Calu3 (cell line): ENCODE measurements at regions of chr11 and their contacts with region 1.

Region 1: GRCh38 chr11:116691771-116692177 is 81.0 kb downstream of the BUD13 start:
- DNase-seq: peak; percentile 60
- H3K4me3 Mint-ChIP-seq: no peak overlapping the region
- H3K27ac Mint-ChIP-seq: no peak overlapping the region
- H3K4me1 Mint-ChIP-seq: peaks cover 8% of the 10 kb centered on the region
- H3K27me3 Mint-ChIP-seq: peaks cover 55% of the 10 kb centered on the region
- CTCF ChIP-seq: peak; percentile 70

Region 2: GRCh38 chr11:115334932-115335788 is 1356.6 kb before region 1 on chr11:
- CTCF ChIA-PET with region 1: no interaction called
- intact Hi-C with region 1: loop called (anchors 5 kb)
- DNase-seq: no peak
- H3K4me3 Mint-ChIP-seq: no peak overlapping the region
- H3K27ac Mint-ChIP-seq: no peak overlapping the region
- H3K4me1 Mint-ChIP-seq: no peaks in the 10 kb centered on the region
- H3K27me3 Mint-ChIP-seq: peaks cover 18% of the 10 kb centered on the region
- CTCF ChIP-seq: no peak

Region 3: DNA sequence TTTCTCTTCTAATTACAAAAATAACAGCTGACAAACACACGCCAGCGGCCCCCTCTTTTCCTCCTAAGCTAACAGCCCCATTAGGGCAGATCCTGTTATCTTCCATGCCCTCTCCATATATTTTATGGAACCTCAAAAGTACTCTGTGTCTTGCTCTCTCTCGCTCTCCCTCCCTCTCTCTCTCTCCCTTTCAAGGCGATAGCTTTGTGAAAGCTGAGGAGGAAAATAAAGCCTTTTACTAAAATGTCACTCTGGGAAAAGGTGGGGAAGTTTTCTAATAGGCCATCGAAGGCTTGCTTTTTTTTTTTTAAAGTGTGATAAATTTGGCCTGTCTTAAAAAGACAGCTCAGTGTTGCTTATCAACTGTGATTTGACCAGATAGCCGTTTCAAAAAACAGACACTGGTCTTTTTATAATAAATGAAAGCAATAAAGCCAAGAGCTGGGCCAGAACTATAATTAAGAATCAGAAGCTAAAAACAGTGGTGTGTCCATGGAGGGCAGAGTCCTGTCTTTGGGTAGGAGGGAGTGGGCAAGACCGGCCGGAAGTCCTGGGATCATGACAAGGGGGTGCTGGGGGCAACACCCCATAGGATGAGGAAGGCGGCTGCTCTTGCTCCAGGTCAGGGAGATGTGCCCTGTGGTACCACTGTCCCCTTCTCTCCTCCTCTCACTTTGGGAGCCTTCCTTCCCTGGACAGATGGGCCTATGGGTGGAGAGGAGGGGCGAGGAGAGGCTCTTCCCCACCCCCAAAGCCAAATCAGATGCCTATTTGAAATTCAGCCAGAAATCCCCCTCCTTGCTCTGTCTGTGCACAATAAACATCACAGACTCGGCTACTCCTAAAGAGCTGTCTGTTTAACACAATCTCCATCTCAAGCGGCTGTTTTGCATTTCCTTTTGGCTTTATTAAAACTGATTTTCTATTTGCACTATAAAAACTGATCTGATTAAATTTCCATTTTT is 186.2 kb before region 1 on chr11:
- CTCF ChIA-PET with region 1: no interaction called
- intact Hi-C with region 1: loop called (anchors 5 kb)
- DNase-seq: no peak
- H3K4me3 Mint-ChIP-seq: no peak overlapping the region
- H3K27ac Mint-ChIP-seq: no peak overlapping the region
- H3K4me1 Mint-ChIP-seq: no peaks in the 10 kb centered on the region
- H3K27me3 Mint-ChIP-seq: peaks cover 96% of the 10 kb centered on the region
- CTCF ChIP-seq: no peak

Region 4: GRCh38 chr11:116986521-116987105 is 294.8 kb after region 1 on chr11:
- CTCF ChIA-PET with region 1: no interaction called
- intact Hi-C with region 1: no loop called
- DNase-seq: no peak
- H3K4me3 Mint-ChIP-seq: no peak overlapping the region
- H3K27ac Mint-ChIP-seq: peak overlapping the region; percentile 24
- H3K4me1 Mint-ChIP-seq: peaks cover 31% of the 10 kb centered on the region
- H3K27me3 Mint-ChIP-seq: no peaks in the 10 kb centered on the region
- CTCF ChIP-seq: no peak